Heart left ventricle (tissue), 16 donors: ENCODE measurements at regions of chr4 and their contacts with region 1.

Region 1: GRCh38 chr4:12041828-12042227 is 613.1 kb upstream of the HS3ST1 start:
- DNase-seq: peak in 1 of 5 donors; percentile 17
- ATAC-seq: peak in 3 of 4 donors; percentile 55 to 69 (median 62)
- H3K4me3 ChIP-seq: no peak overlapping the region
- H3K27ac ChIP-seq: no peak overlapping the region
- H3K4me1 ChIP-seq: no peaks in the 10 kb centered on the region
- H3K27me3 ChIP-seq: no peaks in the 10 kb centered on the region
- CTCF ChIP-seq: peak; percentile 21 to 55 (median 42)
- POLR2A ChIP-seq: no peak

Region 2: DNA sequence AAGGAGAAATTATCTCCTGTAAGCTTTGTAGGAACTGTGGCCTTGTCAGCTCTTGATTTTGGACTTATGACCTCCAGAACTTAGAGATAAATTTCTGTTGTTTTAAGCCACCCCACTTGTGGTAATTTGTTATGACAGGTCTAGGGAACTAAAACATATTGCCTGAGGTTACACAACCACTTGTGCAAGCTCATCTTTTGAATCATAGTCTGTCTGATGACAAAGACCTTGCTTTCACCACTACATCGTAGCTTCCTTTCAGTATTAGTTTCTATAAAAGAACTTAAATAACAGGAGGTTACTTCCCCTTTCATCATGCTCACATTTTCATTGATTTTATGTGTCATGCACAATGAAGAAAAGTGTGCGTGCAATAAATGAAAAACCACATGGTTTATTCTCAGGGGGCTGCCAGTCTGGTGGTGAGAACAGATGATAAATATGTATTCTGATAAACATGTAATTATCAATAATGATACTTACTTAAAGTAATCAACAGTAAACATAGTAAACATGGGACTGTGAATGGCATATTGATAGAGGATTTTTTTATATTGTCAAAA is 76.9 kb after region 1 on chr4:
- intact Hi-C with region 1: no loop called
- DNase-seq: no peak
- ATAC-seq: peak in 3 of 4 donors; percentile 54 to 72 (median 67)
- H3K4me3 ChIP-seq: no peak overlapping the region
- H3K27ac ChIP-seq: peak overlapping the region in 1 of 12 donors; percentile 78
- H3K4me1 ChIP-seq: peaks cover 0 to 35% (median 0%) of the 10 kb centered on the region in 12 donors
- H3K27me3 ChIP-seq: no peaks in the 10 kb centered on the region
- CTCF ChIP-seq: no peak
- POLR2A ChIP-seq: no peak

Region 3: GRCh38 chr4:12409507-12410190 is 367.8 kb after region 1 on chr4:
- intact Hi-C with region 1: loop called in 1 of 10 experiments (anchors 5 kb)
- DNase-seq: no peak
- ATAC-seq: peak in 3 of 4 donors; percentile 32 to 76 (median 57)
- H3K4me3 ChIP-seq: no peak overlapping the region
- H3K27ac ChIP-seq: no peak overlapping the region
- H3K4me1 ChIP-seq: peaks cover 0 to 11% (median 0%) of the 10 kb centered on the region in 12 donors
- H3K27me3 ChIP-seq: no peaks in the 10 kb centered on the region
- CTCF ChIP-seq: peak in 1 of 12 donors; percentile 12
- POLR2A ChIP-seq: no peak